Endothelial cell of umbilical vein (primary cell): ENCODE measurements at regions of chr7 and their contacts with region 1.

Region 1: DNA sequence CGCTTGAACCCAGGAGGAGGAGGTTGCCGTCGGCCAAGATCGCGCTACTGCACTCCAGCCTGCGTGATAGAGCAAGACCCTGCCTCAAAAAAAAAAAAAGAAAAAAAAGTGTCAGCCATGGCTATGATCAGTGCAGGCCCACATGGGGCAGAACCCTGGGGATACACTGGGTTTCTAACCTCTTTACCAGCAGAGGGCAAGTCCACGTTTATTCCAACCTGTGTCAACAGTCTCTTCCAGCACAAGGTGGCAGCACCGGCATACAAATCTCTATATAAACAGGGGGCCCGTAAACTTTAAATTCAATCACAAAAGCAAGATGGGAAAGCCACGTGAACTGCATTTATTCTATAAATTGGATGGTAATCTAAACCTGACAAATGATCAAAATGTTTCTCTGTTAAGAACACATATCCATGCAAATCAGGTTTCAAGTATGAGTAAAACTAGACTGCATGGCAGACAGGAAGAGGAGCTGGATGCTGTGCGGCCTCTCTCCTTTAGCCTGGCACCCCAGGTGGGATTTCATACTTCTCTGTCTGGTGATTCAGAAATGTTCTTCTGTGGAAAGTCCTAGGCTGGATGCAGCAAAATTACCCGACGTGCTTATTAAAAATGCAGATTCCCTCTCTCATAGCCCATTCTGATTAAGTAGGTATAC is 60.0 kb upstream of the STEAP1B start:
- DNase-seq: peak; percentile 85
- H3K4me3 ChIP-seq: no peak overlapping the region
- H3K27ac ChIP-seq: peak overlapping the region; percentile 99
- H3K4me1 ChIP-seq: peaks cover 48% of the 10 kb centered on the region
- H3K27me3 ChIP-seq: peaks cover 0 to under 1% of the 10 kb centered on the region in 2 experiments
- CTCF ChIP-seq: peak; percentile 76 to 87
- POLR2A ChIP-seq: no peak

Region 2: GRCh38 chr7:21550826-21551544 is 1009.0 kb before region 1 on chr7:
- CTCF ChIA-PET with region 1: no interaction called
- POLR2A ChIA-PET with region 1: no interaction called
- dilution Hi-C with region 1: no loop called
- intact Hi-C with region 1: no loop called
- DNase-seq: no peak
- H3K4me3 ChIP-seq: no peak overlapping the region
- H3K27ac ChIP-seq: no peak overlapping the region
- H3K4me1 ChIP-seq: no peaks in the 10 kb centered on the region
- H3K27me3 ChIP-seq: peaks cover 2% of the 10 kb centered on the region in 2 experiments
- CTCF ChIP-seq: no peak
- POLR2A ChIP-seq: no peak

Region 3: GRCh38 chr7:22061775-22062174 is 498.2 kb before region 1 on chr7:
- CTCF ChIA-PET with region 1: no interaction called
- POLR2A ChIA-PET with region 1: no interaction called
- dilution Hi-C with region 1: no loop called
- intact Hi-C with region 1: no loop called
- DNase-seq: no peak
- H3K4me3 ChIP-seq: no peak overlapping the region
- H3K27ac ChIP-seq: no peak overlapping the region
- H3K4me1 ChIP-seq: no peaks in the 10 kb centered on the region
- H3K27me3 ChIP-seq: peaks cover 12 to 18% of the 10 kb centered on the region in 2 experiments
- CTCF ChIP-seq: no peak
- POLR2A ChIP-seq: no peak

Region 4: GRCh38 chr7:22248111-22248809 is 311.7 kb before region 1 on chr7:
- CTCF ChIA-PET with region 1: no interaction called
- POLR2A ChIA-PET with region 1: no interaction called
- dilution Hi-C with region 1: no loop called
- intact Hi-C with region 1: no loop called
- DNase-seq: no peak
- H3K4me3 ChIP-seq: no peak overlapping the region
- H3K27ac ChIP-seq: no peak overlapping the region
- H3K4me1 ChIP-seq: no peaks in the 10 kb centered on the region
- H3K27me3 ChIP-seq: no peaks in the 10 kb centered on the region
- CTCF ChIP-seq: no peak
- POLR2A ChIP-seq: no peak

Region 5: GRCh38 chr7:22633954-22634474 is 74.1 kb after region 1 on chr7:
- CTCF ChIA-PET with region 1: interaction called, 7 read pairs
- POLR2A ChIA-PET with region 1: no interaction called
- dilution Hi-C with region 1: no loop called
- intact Hi-C with region 1: loop called (anchors 1 kb)
- DNase-seq: no peak
- H3K4me3 ChIP-seq: no peak overlapping the region
- H3K27ac ChIP-seq: peak overlapping the region; percentile 92
- H3K4me1 ChIP-seq: peaks cover 41% of the 10 kb centered on the region
- H3K27me3 ChIP-seq: no peaks in the 10 kb centered on the region
- CTCF ChIP-seq: no peak
- POLR2A ChIP-seq: no peak

Region 6: GRCh38 chr7:22667562-22668239 is 107.7 kb after region 1 on chr7:
- CTCF ChIA-PET with region 1: interaction called, 13 read pairs
- POLR2A ChIA-PET with region 1: no interaction called
- dilution Hi-C with region 1: no loop called
- intact Hi-C with region 1: loop called (anchors 1 kb)
- DNase-seq: peak; percentile 83
- H3K4me3 ChIP-seq: no peak overlapping the region
- H3K27ac ChIP-seq: peak overlapping the region; percentile 76
- H3K4me1 ChIP-seq: peaks cover 67% of the 10 kb centered on the region
- H3K27me3 ChIP-seq: no peaks in the 10 kb centered on the region
- CTCF ChIP-seq: no peak
- POLR2A ChIP-seq: no peak

Region 7: GRCh38 chr7:22726345-22727185 is 166.6 kb after region 1 on chr7:
- CTCF ChIA-PET with region 1: interaction called, 450 read pairs
- POLR2A ChIA-PET with region 1: interaction called, 50 read pairs
- dilution Hi-C with region 1: loop called (anchors 25 kb)
- intact Hi-C with region 1: loop called (anchors 1 kb)
- DNase-seq: peak; percentile 84
- H3K4me3 ChIP-seq: peak overlapping the region; percentile 21 to 84 (median 42)
- H3K27ac ChIP-seq: peak overlapping the region; percentile 93
- H3K4me1 ChIP-seq: peaks cover 51% of the 10 kb centered on the region
- H3K27me3 ChIP-seq: no peaks in the 10 kb centered on the region
- CTCF ChIP-seq: peak; percentile 56 to 62
- POLR2A ChIP-seq: no peak

Region 8: GRCh38 chr7:22822486-22823141 is 262.7 kb after region 1 on chr7 and contains the start of gene TOMM7:
- CTCF ChIA-PET with region 1: interaction called, 3 read pairs
- POLR2A ChIA-PET with region 1: no interaction called
- dilution Hi-C with region 1: no loop called
- intact Hi-C with region 1: loop called (anchors 1 kb)
- DNase-seq: peak; percentile 99
- H3K4me3 ChIP-seq: peak within 1 kb of the TSS; percentile 50 to 93 (median 75)
- H3K27ac ChIP-seq: peak within 1 kb of the TSS; percentile 60
- H3K4me1 ChIP-seq: peaks cover 5% of the 10 kb centered on the region
- H3K27me3 ChIP-seq: peaks cover 2 to 11% of the 10 kb centered on the region in 2 experiments
- CTCF ChIP-seq: no peak
- POLR2A ChIP-seq: peak; percentile 95
- total RNA-seq, gene TOMM7: 185 and 200 TPM in 2 replicates

Region 9: GRCh38 chr7:22833113-22833855 is 273.3 kb after region 1 on chr7:
- CTCF ChIA-PET with region 1: no interaction called
- POLR2A ChIA-PET with region 1: no interaction called
- dilution Hi-C with region 1: no loop called
- intact Hi-C with region 1: no loop called
- DNase-seq: no peak
- H3K4me3 ChIP-seq: no peak overlapping the region
- H3K27ac ChIP-seq: no peak overlapping the region
- H3K4me1 ChIP-seq: no peaks in the 10 kb centered on the region
- H3K27me3 ChIP-seq: peaks cover 0 to 1% of the 10 kb centered on the region in 2 experiments
- CTCF ChIP-seq: no peak
- POLR2A ChIP-seq: no peak

Region 10: DNA sequence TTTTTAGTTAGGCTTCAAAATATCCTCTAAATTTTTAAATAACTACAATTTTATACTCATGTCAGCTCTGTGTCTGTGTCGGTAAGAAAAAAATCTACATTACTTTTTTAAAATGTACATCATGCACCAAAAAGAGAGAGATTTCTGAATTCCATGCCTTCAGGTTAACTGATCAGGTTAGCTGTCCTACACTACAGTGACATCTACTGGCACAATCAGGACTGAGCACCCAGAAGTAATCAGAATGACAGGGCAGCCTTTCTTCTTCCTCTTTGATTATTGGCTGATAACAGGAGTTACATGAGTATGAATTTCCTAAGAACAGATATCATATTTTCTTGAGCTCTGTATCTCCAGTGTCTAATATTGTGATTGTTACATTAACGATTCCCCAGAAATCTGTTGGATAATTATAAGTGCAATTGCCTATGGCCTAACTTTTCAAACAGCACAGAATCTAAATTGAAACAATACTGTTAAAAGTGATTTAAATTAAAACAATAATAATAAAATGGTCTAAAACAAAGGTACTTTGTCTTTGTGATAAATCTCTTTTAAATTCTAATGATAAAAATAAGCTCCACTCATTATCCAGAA is 495.7 kb after region 1 on chr7:
- CTCF ChIA-PET with region 1: interaction called, 88 read pairs
- POLR2A ChIA-PET with region 1: no interaction called
- dilution Hi-C with region 1: no loop called
- intact Hi-C with region 1: loop called (anchors 1 kb)
- DNase-seq: peak; percentile 76
- H3K4me3 ChIP-seq: no peak overlapping the region
- H3K27ac ChIP-seq: no peak overlapping the region
- H3K4me1 ChIP-seq: no peaks in the 10 kb centered on the region
- H3K27me3 ChIP-seq: no peaks in the 10 kb centered on the region
- CTCF ChIP-seq: peak; percentile 73 to 76
- POLR2A ChIP-seq: no peak